ENCODE measurements at regions of chr4 and their contacts with region 1.

Region 1: DNA sequence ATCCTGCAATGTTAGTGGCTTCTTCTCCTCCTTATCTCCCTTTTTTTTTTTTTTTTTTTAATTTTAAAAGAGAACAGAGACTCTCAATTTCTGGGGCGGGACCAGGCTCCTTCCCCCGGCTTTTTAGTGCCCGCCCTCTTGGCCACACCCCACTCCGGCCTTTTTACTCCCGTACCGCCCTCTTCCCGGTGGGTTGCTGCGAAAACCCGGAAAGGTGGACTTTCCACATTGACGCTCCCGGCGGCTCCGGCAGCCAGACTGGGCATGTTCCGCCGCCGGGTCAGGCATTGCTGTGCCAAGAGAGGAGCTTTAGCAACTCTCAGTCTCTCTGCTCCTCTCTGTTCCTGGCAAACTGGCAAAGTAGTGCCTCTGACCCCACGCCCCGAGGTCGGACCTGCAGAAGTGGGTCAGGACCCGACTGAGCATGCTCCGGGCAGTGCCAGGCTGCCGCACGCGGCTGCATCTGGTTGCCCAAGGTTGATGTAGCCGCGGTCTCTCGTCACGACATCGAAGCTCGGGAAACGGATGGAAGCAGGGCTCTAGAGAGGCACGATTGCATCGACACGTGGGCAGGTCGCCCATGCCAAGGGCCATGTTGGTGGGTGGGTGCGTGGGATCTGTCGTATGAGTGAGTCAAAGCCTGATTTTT is 1.1 kb upstream of the MFAP3L start:
- DNase-seq: peak; percentile 88 to 93 (median 92)
- H3K4me3 ChIP-seq: peak overlapping the region; percentile 70 to 93
- H3K4me3 Mint-ChIP-seq: peak overlapping the region; percentile 85 to 94 (median 92)
- H3K27ac ChIP-seq: peak overlapping the region; percentile 18
- H3K27ac Mint-ChIP-seq: peak overlapping the region; percentile 82 to 95 (median 88)
- H3K4me1 ChIP-seq: peaks cover 12% of the 10 kb centered on the region
- H3K4me1 Mint-ChIP-seq: peaks cover 5 to 15% (median 8%) of the 10 kb centered on the region in 4 donors
- H3K27me3 ChIP-seq: no peaks in the 10 kb centered on the region
- H3K27me3 Mint-ChIP-seq: peaks cover 2 to 7% of the 10 kb centered on the region in 2 donors

Region 2: GRCh38 chr4:168318266-168318895 is 1708.9 kb before region 1 on chr4 and contains the start of gene DDX60:
- CTCF ChIA-PET with region 1: no interaction called
- POLR2A ChIA-PET with region 1: no interaction called
- intact Hi-C with region 1: loop called (anchors 5 kb)
- DNase-seq: peak; percentile 82 to 93 (median 86)
- H3K4me3 ChIP-seq: peak within 1 kb of the TSS; percentile 68 to 98
- H3K4me3 Mint-ChIP-seq: peak within 1 kb of the TSS; percentile 95 to 98 (median 97)
- H3K27ac ChIP-seq: peak within 1 kb of the TSS; percentile 97
- H3K27ac Mint-ChIP-seq: peak within 1 kb of the TSS; percentile 98 to 99 (median 98)
- H3K4me1 ChIP-seq: peaks cover 28% of the 10 kb centered on the region
- H3K4me1 Mint-ChIP-seq: peaks cover 37 to 53% (median 40%) of the 10 kb centered on the region in 4 donors
- H3K27me3 ChIP-seq: no peaks in the 10 kb centered on the region
- H3K27me3 Mint-ChIP-seq: no peaks in the 10 kb centered on the region
- total RNA-seq, gene DDX60: 33.1 to 33.9 TPM

Region 3: GRCh38 chr4:169619959-169620879 is 407.1 kb before region 1 on chr4 and contains the start of gene CLCN3:
- CTCF ChIA-PET with region 1: no interaction called
- POLR2A ChIA-PET with region 1: interaction called, 7 read pairs
- intact Hi-C with region 1: loop called (anchors 1 kb)
- DNase-seq: peak; percentile 80 to 91 (median 83)
- H3K4me3 ChIP-seq: peak within 1 kb of the TSS; percentile 94 to 97
- H3K4me3 Mint-ChIP-seq: peak within 1 kb of the TSS; percentile 88 to 100 (median 96)
- H3K27ac ChIP-seq: peak within 1 kb of the TSS; percentile 87
- H3K27ac Mint-ChIP-seq: peak within 1 kb of the TSS; percentile 94 to 100 (median 99)
- H3K4me1 ChIP-seq: peaks cover 38% of the 10 kb centered on the region
- H3K4me1 Mint-ChIP-seq: peaks cover 36 to 72% (median 52%) of the 10 kb centered on the region in 4 donors
- H3K27me3 ChIP-seq: no peaks in the 10 kb centered on the region
- H3K27me3 Mint-ChIP-seq: no peaks in the 10 kb centered on the region
- total RNA-seq, gene CLCN3: 37.5 to 37.7 TPM

Region 4: DNA sequence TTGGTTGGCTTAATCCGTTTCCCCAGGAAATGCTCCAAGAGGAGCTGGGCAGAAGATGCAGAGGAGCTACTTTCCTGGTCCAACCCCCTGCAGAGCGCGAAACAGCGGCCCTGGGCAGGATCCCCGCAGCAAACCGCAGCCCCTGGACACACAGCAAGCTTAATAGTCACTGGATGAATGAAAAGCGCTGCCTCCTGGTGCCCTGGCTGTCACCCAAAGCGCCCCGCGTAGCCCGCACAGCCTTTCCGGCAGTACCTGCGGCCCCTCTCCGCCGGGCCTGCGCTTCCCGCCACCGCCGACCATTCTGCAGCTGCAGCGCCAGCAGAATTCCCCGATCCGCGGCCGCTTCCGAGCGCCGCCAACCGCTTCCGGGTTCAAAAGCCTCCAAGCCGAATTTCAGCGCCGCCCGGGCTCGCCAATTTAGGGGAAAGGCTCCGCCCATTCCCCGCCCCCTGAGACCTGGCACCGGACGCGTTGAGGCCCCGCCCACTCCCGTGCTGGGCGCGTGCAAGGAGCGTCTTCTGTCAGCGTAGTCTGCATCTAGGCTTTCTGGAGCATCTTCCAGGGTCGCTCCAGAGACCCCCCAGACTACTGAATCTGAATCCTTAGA is 269.6 kb before region 1 on chr4 and contains the start of gene HPF1:
- CTCF ChIA-PET with region 1: no interaction called
- POLR2A ChIA-PET with region 1: interaction called, 4 read pairs
- intact Hi-C with region 1: loop called (anchors 1 kb)
- DNase-seq: peak; percentile 89 to 93 (median 90)
- H3K4me3 ChIP-seq: peak within 1 kb of the TSS; percentile 83 to 89
- H3K4me3 Mint-ChIP-seq: peak within 1 kb of the TSS; percentile 83 to 93 (median 88)
- H3K27ac ChIP-seq: peak within 1 kb of the TSS; percentile 54
- H3K27ac Mint-ChIP-seq: peak within 1 kb of the TSS; percentile 12 to 85 (median 53)
- H3K4me1 ChIP-seq: peaks cover 18% of the 10 kb centered on the region
- H3K4me1 Mint-ChIP-seq: peaks cover 23 to 33% (median 26%) of the 10 kb centered on the region in 4 donors
- H3K27me3 ChIP-seq: no peaks in the 10 kb centered on the region
- H3K27me3 Mint-ChIP-seq: no peaks in the 10 kb centered on the region
- total RNA-seq, gene HPF1: 14.4 to 15.0 TPM

Measured in CD4-positive, alpha-beta memory T cell (primary cell).